Psoas muscle (tissue), 8 donors: ENCODE measurements at regions of chr17 and their contacts with region 1.

Region 1: DNA sequence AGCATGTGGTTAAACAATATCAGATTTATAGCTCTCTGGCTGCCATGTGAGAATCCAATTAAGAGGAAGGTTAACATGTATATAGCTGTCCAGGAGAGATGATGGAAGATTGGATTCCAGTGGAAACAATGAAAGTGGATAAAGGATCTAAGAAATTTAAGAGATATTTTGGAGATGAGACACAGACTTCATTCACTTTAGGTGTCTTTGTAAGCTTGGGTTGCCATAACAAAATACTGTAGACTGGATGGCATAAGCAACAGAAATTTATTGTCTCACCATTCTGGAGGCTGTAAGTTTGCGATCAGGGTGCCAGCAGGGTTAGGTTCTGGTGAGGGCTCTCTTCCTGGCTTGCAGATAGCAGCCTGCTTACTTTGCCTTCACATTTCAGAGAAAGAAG is 155.9 kb upstream of the MYOCD start:
- DNase-seq: no peak
- ATAC-seq: no peak
- H3K4me3 ChIP-seq: no peak overlapping the region
- H3K27ac ChIP-seq: no peak overlapping the region
- H3K4me1 ChIP-seq: no peaks in the 10 kb centered on the region
- H3K27me3 ChIP-seq: no peaks in the 10 kb centered on the region
- CTCF ChIP-seq: no peak

Region 2: GRCh38 chr17:12568358-12569251 is 58.8 kb after region 1 on chr17:
- intact Hi-C with region 1: loop called in 1 of 2 experiments (anchors 10 kb)
- DNase-seq: no peak
- ATAC-seq: no peak
- H3K4me3 ChIP-seq: no peak overlapping the region
- H3K27ac ChIP-seq: no peak overlapping the region
- H3K4me1 ChIP-seq: no peaks in the 10 kb centered on the region
- H3K27me3 ChIP-seq: peaks cover 0 to 5% (median 0%) of the 10 kb centered on the region in 3 donors
- CTCF ChIP-seq: no peak